MCF 10A (cell line): ENCODE measurements at regions of chr6 and their contacts with region 1.

Region 1: GRCh38 chr6:163956571-163957407 is 542.3 kb downstream of the QKI start:
- DNase-seq: peak; percentile 86
- H3K4me3 Mint-ChIP-seq: no peak overlapping the region
- H3K27ac Mint-ChIP-seq: no peak overlapping the region
- H3K4me1 Mint-ChIP-seq: peaks cover 11% of the 10 kb centered on the region
- H3K27me3 Mint-ChIP-seq: no peaks in the 10 kb centered on the region
- CTCF ChIP-seq: peak; percentile 79

Region 2: GRCh38 chr6:163419413-163420288 is 537.1 kb before region 1 on chr6:
- CTCF ChIA-PET with region 1: interaction called, 3 read pairs
- POLR2A ChIA-PET with region 1: interaction called, 6 read pairs
- intact Hi-C with region 1: loop called (anchors 1 kb)
- DNase-seq: peak; percentile 32
- H3K4me3 Mint-ChIP-seq: peak overlapping the region; percentile 96
- H3K27ac Mint-ChIP-seq: peak overlapping the region; percentile 93
- H3K4me1 Mint-ChIP-seq: peaks cover 24% of the 10 kb centered on the region
- H3K27me3 Mint-ChIP-seq: no peaks in the 10 kb centered on the region
- CTCF ChIP-seq: no peak

Region 3: DNA sequence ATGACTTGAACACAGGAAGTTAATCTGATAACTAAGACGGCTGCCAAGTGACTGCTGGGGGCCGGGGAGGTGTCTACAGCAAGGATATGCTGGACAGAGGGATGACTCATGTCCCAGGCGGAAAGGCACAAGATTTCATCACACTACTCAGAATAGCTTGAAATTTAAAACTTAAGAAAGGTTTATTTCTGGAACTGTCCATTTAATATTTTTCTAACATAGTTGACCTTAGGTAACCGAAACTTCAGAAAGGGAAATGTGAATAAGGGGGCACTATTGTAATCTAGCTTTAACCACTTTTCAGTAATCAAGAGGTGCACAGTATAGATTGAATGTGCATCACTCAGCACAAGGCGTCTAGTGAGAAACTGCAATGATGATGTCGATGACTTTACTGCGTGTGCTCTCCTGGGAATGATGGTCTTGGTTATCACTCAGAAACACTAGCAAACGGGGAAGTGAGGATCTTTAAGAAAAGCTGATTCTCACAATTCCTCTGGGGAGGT is 370.8 kb before region 1 on chr6:
- CTCF ChIA-PET with region 1: no interaction called
- POLR2A ChIA-PET with region 1: interaction called, 3 read pairs
- intact Hi-C with region 1: loop called (anchors 1 kb)
- DNase-seq: peak; percentile 90
- H3K4me3 Mint-ChIP-seq: peak overlapping the region; percentile 41
- H3K27ac Mint-ChIP-seq: peak overlapping the region; percentile 83
- H3K4me1 Mint-ChIP-seq: peaks cover 32% of the 10 kb centered on the region
- H3K27me3 Mint-ChIP-seq: no peaks in the 10 kb centered on the region
- CTCF ChIP-seq: no peak